ENCODE measurements at regions of chr22 and their contacts with region 1.

Region 1: DNA sequence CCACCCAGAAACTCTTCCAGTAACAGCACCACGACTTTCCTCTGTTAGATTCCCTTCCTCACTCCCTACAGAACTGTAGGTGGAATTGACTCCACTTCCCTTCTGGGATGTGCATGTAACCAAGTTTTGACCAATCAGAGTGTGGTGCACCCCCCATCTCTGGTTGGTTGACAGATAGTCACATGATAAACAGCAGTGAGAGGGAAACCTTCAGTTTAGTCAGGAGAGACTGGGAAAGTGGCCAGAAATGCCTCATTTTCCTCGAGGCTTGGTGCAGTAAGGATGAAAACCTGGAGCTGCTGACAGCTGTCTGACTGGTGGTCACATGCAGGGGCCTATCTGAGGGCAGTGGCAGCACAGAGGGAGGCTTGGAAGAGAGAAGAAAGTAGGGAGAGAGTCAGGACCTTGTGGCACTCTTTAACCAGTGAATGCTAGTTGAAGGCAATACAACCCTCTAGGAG is 67.3 kb upstream of the GRK3 start:
- DNase-seq: no peak
- H3K4me3 ChIP-seq: no peak overlapping the region
- H3K27ac ChIP-seq: no peak overlapping the region
- H3K4me1 ChIP-seq: no peaks in the 10 kb centered on the region
- H3K27me3 ChIP-seq: no peaks in the 10 kb centered on the region
- CTCF ChIP-seq: no peak
- POLR2A ChIP-seq: no peak

Region 2: GRCh38 chr22:25536589-25536988 is 39.4 kb after region 1 on chr22:
- intact Hi-C with region 1: loop called (anchors 2 kb)
- DNase-seq: no peak
- H3K4me3 ChIP-seq: no peak overlapping the region
- H3K27ac ChIP-seq: no peak overlapping the region
- H3K4me1 ChIP-seq: no peaks in the 10 kb centered on the region
- H3K27me3 ChIP-seq: no peaks in the 10 kb centered on the region
- CTCF ChIP-seq: no peak
- POLR2A ChIP-seq: no peak

Region 3: DNA sequence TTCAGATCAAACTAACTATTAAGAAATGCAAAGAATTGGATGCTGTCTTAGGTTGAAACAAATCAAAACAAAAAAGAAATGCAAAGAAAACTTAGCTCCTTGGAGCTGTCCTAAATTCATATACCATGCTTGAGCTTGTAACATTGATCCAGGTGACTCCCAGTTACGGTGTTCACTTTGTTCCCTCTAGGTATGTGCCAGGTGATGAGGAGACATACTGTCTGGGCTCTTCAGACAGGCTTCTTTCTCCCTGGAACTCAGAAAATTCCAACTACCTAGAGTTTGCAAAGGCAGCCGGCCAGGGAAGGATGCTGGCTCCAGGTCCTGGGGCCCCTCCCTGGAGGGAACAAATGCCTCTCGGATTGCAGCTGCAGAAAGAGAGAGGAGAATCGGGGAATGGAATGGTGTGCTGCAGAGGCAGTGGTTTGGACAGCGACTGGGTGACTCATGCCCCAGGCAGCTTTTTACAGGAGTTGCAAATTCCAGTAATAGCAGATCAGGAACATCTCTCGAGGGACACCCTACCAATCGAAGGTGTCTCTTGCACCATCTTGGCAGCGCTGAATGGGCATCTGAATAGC is 919.5 kb after region 1 on chr22:
- intact Hi-C with region 1: no loop called
- DNase-seq: peak in 1 of 2 donors; percentile 59
- H3K4me3 ChIP-seq: no peak overlapping the region
- H3K27ac ChIP-seq: no peak overlapping the region
- H3K4me1 ChIP-seq: peaks cover 0 to 6% of the 10 kb centered on the region in 2 donors
- H3K27me3 ChIP-seq: peaks cover 0 to 6% of the 10 kb centered on the region in 2 donors
- CTCF ChIP-seq: no peak
- POLR2A ChIP-seq: no peak